ENCODE measurements at regions of chr2 and their contacts with region 1.

Region 1: GRCh38 chr2:16442971-16443370 is 222.7 kb downstream of the CYRIA start:
- DNase-seq: peak; percentile 1
- H3K4me3 ChIP-seq: no peak overlapping the region
- H3K27ac ChIP-seq: no peak overlapping the region
- H3K4me1 ChIP-seq: no peaks in the 10 kb centered on the region
- CTCF ChIP-seq: 0 out of 2 replicates have a peak, but pooled peaks have one; percentile 21

Region 2: DNA sequence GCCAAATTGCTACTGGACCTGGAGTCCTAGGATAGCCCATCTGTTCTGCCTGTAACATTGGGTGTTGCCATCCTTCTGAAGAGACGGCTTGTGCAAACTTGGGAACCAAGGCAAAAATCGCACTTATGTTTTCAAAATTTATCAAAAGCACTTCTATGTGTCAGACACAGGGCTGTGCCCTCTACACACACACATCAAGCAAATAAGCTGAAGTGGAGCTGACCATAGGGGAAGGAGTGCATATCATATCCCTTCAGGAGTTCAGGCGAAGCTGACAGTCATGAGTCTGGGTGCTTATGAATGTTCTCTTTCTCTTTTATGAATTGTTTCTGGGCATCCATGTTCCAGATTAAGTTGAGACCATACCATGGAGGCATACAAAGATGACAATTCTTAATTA is 25.2 kb before region 1 on chr2:
- CTCF ChIA-PET with region 1: no interaction called
- POLR2A ChIA-PET with region 1: interaction called, 10 read pairs
- intact Hi-C with region 1: no loop called
- DNase-seq: no peak
- H3K4me3 ChIP-seq: no peak overlapping the region
- H3K27ac ChIP-seq: no peak overlapping the region
- H3K4me1 ChIP-seq: no peaks in the 10 kb centered on the region
- CTCF ChIP-seq: no peak

Region 3: GRCh38 chr2:16478434-16479210 is 35.7 kb after region 1 on chr2:
- CTCF ChIA-PET with region 1: no interaction called
- POLR2A ChIA-PET with region 1: no interaction called
- intact Hi-C with region 1: no loop called
- DNase-seq: no peak
- H3K4me3 ChIP-seq: no peak overlapping the region
- H3K27ac ChIP-seq: no peak overlapping the region
- H3K4me1 ChIP-seq: no peaks in the 10 kb centered on the region
- CTCF ChIP-seq: no peak